Activated naive CD8-positive, alpha-beta T cell treated with anti-CD3 and anti-CD28 coated beads, Interleukin-2, amount 10 ng/mL, durations not matched to agents 7 days and 5 days (primary cell): ENCODE measurements at regions of chr2 and their contacts with region 1.

Region 1: DNA sequence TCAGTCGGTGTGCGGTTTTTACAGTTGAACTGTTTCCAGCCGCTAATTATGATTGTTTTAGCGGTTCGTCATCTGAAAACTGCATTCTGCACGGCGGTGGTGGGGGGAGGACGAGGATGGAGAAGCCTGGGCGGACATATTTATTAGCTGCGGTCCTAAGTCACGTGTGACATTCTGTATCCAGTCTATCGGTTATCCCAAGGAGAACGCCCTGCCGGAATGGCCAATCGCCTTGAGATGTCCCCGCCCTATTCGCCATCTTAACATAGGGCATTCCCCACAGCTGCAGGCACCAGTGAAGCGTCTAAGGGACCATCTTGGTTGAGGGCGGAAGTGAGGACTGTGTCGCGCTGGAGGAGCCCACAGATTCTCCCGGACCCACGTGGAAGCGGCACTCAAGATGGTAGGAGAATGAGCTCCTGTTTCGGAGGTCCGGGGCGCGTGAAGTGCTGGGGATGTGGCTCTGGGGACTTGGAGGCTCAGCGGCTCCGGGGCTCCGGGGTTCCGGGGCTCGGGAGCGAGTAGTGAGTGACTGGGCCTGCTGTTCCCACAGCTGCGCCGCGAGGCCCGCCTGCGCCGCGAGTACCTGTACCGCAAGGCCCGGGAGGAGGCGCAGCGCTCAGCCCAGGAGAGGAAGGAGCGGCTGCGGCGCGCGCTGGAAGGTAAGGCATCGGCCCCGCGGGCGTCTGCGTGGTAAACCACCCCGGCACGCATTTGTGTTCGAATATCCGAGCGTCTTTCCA is at the start of gene IMP4:
- DNase-seq: peak; percentile 87
- ATAC-seq: peak; percentile 90
- H3K4me3 Mint-ChIP-seq: peak within 1 kb of the TSS; percentile 99
- H3K27ac Mint-ChIP-seq: peak within 1 kb of the TSS; percentile 98
- H3K4me1 Mint-ChIP-seq: peaks cover 17% of the 10 kb centered on the region
- H3K27me3 Mint-ChIP-seq: no peaks in the 10 kb centered on the region
- total RNA-seq, gene IMP4: 64.9 to 65.8 TPM

Region 2: GRCh38 chr2:130181325-130181879 is 161.3 kb before region 1 on chr2 and contains the start of gene SMPD4:
- POLR2A ChIA-PET with region 1: interaction called, 38 read pairs
- DNase-seq: peak; percentile 98
- ATAC-seq: peak; percentile 73
- H3K4me3 Mint-ChIP-seq: peak within 1 kb of the TSS; percentile 93
- H3K27ac Mint-ChIP-seq: peak within 1 kb of the TSS; percentile 93
- H3K4me1 Mint-ChIP-seq: peaks cover 13% of the 10 kb centered on the region
- H3K27me3 Mint-ChIP-seq: no peaks in the 10 kb centered on the region
- total RNA-seq, gene SMPD4: 67.3 to 74.2 TPM

Region 3: GRCh38 chr2:130355578-130356431 is 13.1 kb after region 1 on chr2 and contains the start of gene PTPN18:
- POLR2A ChIA-PET with region 1: interaction called, 18 read pairs
- DNase-seq: peak; percentile 74
- ATAC-seq: peak; percentile 94
- H3K4me3 Mint-ChIP-seq: peak within 1 kb of the TSS; percentile 83
- H3K27ac Mint-ChIP-seq: no peak within 1 kb of the TSS
- H3K4me1 Mint-ChIP-seq: peaks cover 14% of the 10 kb centered on the region
- H3K27me3 Mint-ChIP-seq: peaks cover 2% of the 10 kb centered on the region
- total RNA-seq, gene PTPN18: 57.7 to 64.5 TPM

Region 4: GRCh38 chr2:130372055-130372832 is 29.5 kb after region 1 on chr2:
- POLR2A ChIA-PET with region 1: interaction called, 42 read pairs
- DNase-seq: peak; percentile 84
- ATAC-seq: peak; percentile 68
- H3K4me3 Mint-ChIP-seq: peak overlapping the region; percentile 95
- H3K27ac Mint-ChIP-seq: peak overlapping the region; percentile 96
- H3K4me1 Mint-ChIP-seq: peaks cover 51% of the 10 kb centered on the region
- H3K27me3 Mint-ChIP-seq: peaks cover 13% of the 10 kb centered on the region

Region 5: GRCh38 chr2:130391058-130391871 is 48.6 kb after region 1 on chr2:
- POLR2A ChIA-PET with region 1: interaction called, 19 read pairs
- DNase-seq: peak; percentile 80
- ATAC-seq: peak; percentile 96
- H3K4me3 Mint-ChIP-seq: peak overlapping the region; percentile 93
- H3K27ac Mint-ChIP-seq: peak overlapping the region; percentile 92
- H3K4me1 Mint-ChIP-seq: peaks cover 4% of the 10 kb centered on the region
- H3K27me3 Mint-ChIP-seq: peaks cover 13% of the 10 kb centered on the region